Testis (tissue), 5 donors: ENCODE measurements at regions of chr4 and their contacts with region 1.

Region 1: GRCh38 chr4:139083956-139084803 is 68.6 kb downstream of the NOCT start:
- DNase-seq: peak; percentile 95
- H3K4me3 ChIP-seq: peak overlapping the region; percentile 82 to 95
- H3K27ac ChIP-seq: peak overlapping the region; percentile 94 to 97
- H3K4me1 ChIP-seq: peaks cover 17% of the 10 kb centered on the region
- H3K27me3 ChIP-seq: no peaks in the 10 kb centered on the region
- CTCF ChIP-seq: peak in 1 of 3 experiments; percentile 13
- POLR2A ChIP-seq: no peak

Region 2: GRCh38 chr4:139144161-139144859 is 60.1 kb after region 1 on chr4:
- intact Hi-C with region 1: no loop called
- DNase-seq: peak; percentile 74
- H3K4me3 ChIP-seq: no peak overlapping the region
- H3K27ac ChIP-seq: no peak overlapping the region
- H3K4me1 ChIP-seq: peaks cover 25% of the 10 kb centered on the region
- H3K27me3 ChIP-seq: no peaks in the 10 kb centered on the region
- CTCF ChIP-seq: no peak
- POLR2A ChIP-seq: no peak

Region 3: DNA sequence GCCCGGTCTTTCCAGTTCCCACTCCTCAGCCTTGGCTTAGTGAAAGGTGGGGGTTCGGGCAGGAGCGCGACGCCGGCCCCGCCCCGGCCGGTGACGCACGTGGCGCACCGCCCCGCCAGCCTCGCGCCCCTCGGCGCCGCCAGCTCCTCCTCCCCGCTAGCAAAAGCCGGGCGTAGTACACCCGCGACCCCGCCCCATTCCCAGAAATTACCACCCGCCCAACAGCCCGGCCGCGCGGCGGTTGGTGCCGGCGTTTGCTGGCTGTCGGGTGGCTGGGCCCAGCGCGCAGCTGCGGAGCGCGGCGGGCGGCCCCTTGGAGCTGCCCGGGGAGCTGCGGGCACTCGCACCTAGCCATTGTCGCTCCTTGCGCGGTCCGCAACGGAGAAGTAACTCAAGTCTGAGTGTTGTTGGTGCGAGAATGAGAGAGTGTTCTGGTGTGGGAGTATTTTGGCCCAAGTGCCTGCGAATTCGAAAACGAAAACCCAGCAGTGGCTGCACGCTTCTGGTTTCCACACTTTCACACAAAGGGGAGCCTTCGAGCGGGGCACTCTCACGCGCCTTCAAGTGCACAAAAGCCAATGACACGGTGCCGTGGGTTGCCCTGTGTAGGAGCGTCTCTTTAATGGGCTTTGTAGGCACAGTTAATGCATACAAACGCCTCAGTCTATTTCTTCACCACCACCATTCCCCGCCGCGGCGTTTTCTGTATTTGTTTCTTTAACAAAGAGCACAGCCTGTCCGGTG is 93.9 kb after region 1 on chr4:
- intact Hi-C with region 1: loop called (anchors 10 kb)
- DNase-seq: peak; percentile 95
- H3K4me3 ChIP-seq: peak overlapping the region; percentile 99 to 100
- H3K27ac ChIP-seq: peak overlapping the region; percentile 99 to 100
- H3K4me1 ChIP-seq: peaks cover 5% of the 10 kb centered on the region
- H3K27me3 ChIP-seq: no peaks in the 10 kb centered on the region
- CTCF ChIP-seq: no peak
- POLR2A ChIP-seq: peak; percentile 40